ENCODE measurements at regions of chr6 and their contacts with region 1.

Region 1: GRCh38 chr6:153032255-153032882 is 29.9 kb upstream of the MTRF1L start:
- DNase-seq: no peak
- ATAC-seq: no peak
- H3K4me3 ChIP-seq: no peak overlapping the region
- H3K27ac ChIP-seq: no peak overlapping the region
- H3K4me1 ChIP-seq: no peaks in the 10 kb centered on the region
- H3K27me3 ChIP-seq: no peaks in the 10 kb centered on the region
- CTCF ChIP-seq: peak; percentile 41

Region 2: DNA sequence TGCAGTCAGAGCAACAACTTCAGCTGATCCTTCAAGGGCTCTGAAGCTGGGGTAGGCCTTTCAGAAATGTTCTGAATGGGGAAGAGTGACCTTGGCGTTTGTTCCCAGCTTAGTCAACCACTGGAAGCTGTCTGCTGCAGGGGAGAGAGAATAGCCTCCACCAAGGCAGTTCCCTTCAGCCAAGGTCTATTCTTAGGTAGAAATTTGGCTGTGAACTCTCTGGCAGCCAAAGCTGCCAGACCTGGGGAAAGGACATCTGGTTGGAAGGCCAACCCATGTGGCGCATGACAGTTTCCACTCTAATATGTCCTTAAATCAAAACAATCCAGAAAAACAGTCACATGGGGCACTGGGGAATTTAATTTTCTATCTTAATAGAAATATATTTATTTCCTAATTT is 109.7 kb before region 1 on chr6:
- intact Hi-C with region 1: no loop called
- DNase-seq: peak in 1 of 2 donors; percentile 50
- ATAC-seq: peak; percentile 87 to 100 (median 94)
- H3K4me3 ChIP-seq: no peak overlapping the region
- H3K27ac ChIP-seq: no peak overlapping the region
- H3K4me1 ChIP-seq: peaks cover 6% of the 10 kb centered on the region
- H3K27me3 ChIP-seq: no peaks in the 10 kb centered on the region
- CTCF ChIP-seq: no peak

Region 3: DNA sequence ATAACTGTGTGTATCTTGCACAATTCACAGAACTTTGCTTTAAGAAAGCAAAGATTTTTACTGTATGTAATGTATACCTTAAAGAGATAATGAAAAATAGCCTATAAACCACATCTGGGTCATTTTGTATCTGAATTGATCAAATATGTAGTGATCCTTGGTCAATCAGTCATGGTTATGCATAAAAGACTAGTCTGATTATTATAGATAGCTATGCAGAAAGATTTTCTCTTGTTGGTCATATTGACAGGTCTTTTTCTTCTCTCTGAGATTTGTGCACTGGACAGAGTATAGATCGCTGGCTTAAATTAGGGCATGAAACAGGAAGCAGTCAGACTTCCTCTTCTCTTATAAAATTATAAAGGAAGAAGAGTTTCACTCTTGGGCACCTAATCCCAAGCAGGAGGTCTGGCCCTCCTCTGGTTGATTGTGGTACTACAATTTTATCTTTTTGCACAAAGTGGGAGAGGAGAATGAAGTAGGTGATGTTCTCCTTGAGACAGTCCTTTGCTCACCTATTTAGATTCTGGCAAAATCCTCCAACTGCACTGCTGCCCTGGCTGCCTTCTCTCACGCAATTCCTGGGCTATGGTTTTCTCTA is 479.6 kb after region 1 on chr6:
- intact Hi-C with region 1: loop called in 1 of 2 experiments (anchors 10 kb)
- DNase-seq: no peak
- ATAC-seq: no peak
- H3K4me3 ChIP-seq: no peak overlapping the region
- H3K27ac ChIP-seq: no peak overlapping the region
- H3K4me1 ChIP-seq: no peaks in the 10 kb centered on the region
- H3K27me3 ChIP-seq: no peaks in the 10 kb centered on the region
- CTCF ChIP-seq: peak; percentile 41

Measured in psoas muscle (tissue), 8 donors.